ENCODE measurements at regions of chr20 and their contacts with region 1.

Region 1: GRCh38 chr20:32762149-32762753 is at the start of gene DNMT3B:
- DNase-seq: peak; percentile 94 to 99 (median 99)
- ATAC-seq: peak; percentile 78
- H3K4me3 ChIP-seq: peak within 1 kb of the TSS; percentile 90
- H3K27ac ChIP-seq: peak within 1 kb of the TSS; percentile 86
- H3K4me1 ChIP-seq: peaks cover 27 to 55% of the 10 kb centered on the region in 2 experiments; a peak in 4 of 5 replicates
- H3K27me3 ChIP-seq: no peaks in the 10 kb centered on the region
- CTCF ChIP-seq: peak in 2 of 3 experiments; percentile 47 to 67; a peak in 4 of 6 replicates
- EP300 ChIP-seq: peak; percentile 60; the same call in 1 of the 2 replicates
- POLR2A ChIP-seq: no peak; the same call in 1 of the 2 replicates
- RAD21 ChIP-seq: peak; percentile 47 to 70; a peak in 3 of 4 replicates
- polyA plus RNA-seq, gene DNMT3B: 9.3 to 11.5 TPM

Region 2: DNA sequence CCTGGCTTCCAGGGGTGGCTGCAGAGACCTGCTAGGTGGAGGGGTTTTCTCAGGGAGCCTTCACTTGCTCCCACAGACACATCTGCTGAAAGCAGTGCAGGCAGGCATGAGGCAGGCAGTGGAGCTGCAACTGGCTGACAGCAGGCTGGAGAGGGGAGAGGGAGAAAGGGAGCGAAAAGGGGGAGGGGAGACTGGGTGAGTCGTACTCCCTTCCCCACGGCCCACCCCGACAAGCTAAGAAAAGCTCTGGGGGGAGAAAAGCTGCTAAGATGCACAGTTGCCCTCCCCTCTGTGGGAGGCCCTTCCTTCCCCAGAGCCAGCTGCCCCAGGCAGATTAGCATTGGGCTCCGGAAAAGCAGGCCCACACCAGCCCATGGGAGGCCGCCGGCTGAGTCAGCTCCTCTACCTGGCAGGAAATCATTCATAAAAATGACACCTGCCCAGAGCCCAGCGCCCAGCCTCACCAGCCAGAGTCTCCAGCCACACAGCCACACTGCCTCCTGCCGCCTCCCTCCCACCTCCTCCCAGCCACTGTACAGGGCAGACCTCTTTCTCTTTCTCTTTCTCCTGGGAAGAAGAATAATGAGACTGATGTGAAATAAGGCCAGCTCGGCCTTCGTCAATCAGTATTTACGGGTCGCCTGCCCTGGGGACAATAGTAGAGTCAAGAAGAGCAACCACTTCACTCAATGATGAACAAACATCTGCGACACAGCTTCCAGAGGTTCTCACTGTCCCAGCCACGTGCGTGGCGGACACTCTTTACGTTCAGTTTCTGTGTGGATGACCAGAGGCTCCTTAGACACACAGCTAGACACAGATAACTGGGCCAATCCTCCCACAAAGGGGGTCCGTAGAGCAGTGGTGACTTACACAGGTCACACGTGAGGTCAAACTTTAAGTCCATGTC is 80.8 kb before region 1 on chr20:
- CTCF ChIA-PET with region 1: no interaction called
- POLR2A ChIA-PET with region 1: interaction called, 7 read pairs
- in situ Hi-C with region 1: loop called (anchors 5 kb)
- intact Hi-C with region 1: loop called (anchors 5 kb)
- DNase-seq: peak; percentile 84 to 97 (median 89)
- ATAC-seq: peak; percentile 91
- H3K4me3 ChIP-seq: no peak overlapping the region; the same call in 1 of the 2 replicates
- H3K27ac ChIP-seq: peak overlapping the region; percentile 93
- H3K4me1 ChIP-seq: peaks cover 56 to 57% of the 10 kb centered on the region in 2 experiments
- H3K27me3 ChIP-seq: no peaks in the 10 kb centered on the region
- CTCF ChIP-seq: peak in 1 of 3 experiments; percentile 16; a peak in 1 of 6 replicates
- EP300 ChIP-seq: peak; percentile 85; the same call in 1 of the 2 replicates
- POLR2A ChIP-seq: peak; percentile 70
- RAD21 ChIP-seq: peak in 1 of 2 experiments; percentile 28; a peak in 1 of 4 replicates

Region 3: DNA sequence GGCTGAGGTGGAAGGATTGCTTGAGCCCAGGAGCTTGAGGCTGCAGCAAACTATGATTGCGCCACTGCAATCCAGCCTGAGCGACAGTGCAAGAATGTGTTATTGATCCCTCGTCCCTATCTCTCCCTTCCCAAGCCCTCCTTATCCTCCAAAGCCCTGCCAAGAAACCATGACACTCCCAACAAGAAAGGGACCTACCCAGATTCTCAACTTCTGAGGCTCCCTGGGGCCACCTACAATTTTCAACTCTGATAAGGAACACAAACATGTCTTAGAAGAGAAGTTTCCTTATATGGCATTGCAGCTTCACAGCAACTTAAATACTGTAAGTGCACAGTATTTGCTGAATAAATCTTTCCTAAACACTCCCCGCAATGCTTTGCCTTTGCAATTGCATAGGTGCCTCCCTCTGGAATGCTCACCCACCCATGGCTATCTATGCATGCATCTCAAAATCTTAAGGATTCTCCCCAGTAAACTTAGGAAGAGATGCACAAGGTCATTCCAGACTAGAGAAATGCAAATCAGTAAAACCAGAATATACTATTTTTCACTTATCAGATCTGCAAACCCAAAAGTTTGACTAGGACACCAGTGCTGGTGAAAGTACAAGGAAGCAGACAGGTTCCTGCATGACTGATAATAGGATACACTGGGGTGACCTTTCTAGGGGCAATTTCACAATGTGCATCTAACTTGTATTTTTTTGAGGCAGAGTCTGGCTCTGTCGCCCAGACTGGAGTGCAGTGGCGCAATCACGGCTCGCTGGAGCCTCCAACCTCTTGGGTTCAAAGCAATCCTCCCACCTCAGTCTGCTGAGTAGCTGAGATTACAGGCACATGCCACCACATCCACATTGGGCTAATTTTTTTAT is 30.6 kb before region 1 on chr20:
- CTCF ChIA-PET with region 1: no interaction called
- POLR2A ChIA-PET with region 1: interaction called, 13 read pairs
- in situ Hi-C with region 1: no loop called
- intact Hi-C with region 1: no loop called
- DNase-seq: peak; percentile 44 to 68 (median 58)
- ATAC-seq: peak; percentile 69
- H3K4me3 ChIP-seq: no peak overlapping the region
- H3K27ac ChIP-seq: peak overlapping the region; percentile 59; the same call in 2 of the 3 replicates
- H3K4me1 ChIP-seq: peaks cover 19 to 21% of the 10 kb centered on the region in 2 experiments
- H3K27me3 ChIP-seq: no peaks in the 10 kb centered on the region
- CTCF ChIP-seq: no peak
- EP300 ChIP-seq: no peak; the same call in 1 of the 2 replicates
- POLR2A ChIP-seq: no peak
- RAD21 ChIP-seq: no peak

Region 4: DNA sequence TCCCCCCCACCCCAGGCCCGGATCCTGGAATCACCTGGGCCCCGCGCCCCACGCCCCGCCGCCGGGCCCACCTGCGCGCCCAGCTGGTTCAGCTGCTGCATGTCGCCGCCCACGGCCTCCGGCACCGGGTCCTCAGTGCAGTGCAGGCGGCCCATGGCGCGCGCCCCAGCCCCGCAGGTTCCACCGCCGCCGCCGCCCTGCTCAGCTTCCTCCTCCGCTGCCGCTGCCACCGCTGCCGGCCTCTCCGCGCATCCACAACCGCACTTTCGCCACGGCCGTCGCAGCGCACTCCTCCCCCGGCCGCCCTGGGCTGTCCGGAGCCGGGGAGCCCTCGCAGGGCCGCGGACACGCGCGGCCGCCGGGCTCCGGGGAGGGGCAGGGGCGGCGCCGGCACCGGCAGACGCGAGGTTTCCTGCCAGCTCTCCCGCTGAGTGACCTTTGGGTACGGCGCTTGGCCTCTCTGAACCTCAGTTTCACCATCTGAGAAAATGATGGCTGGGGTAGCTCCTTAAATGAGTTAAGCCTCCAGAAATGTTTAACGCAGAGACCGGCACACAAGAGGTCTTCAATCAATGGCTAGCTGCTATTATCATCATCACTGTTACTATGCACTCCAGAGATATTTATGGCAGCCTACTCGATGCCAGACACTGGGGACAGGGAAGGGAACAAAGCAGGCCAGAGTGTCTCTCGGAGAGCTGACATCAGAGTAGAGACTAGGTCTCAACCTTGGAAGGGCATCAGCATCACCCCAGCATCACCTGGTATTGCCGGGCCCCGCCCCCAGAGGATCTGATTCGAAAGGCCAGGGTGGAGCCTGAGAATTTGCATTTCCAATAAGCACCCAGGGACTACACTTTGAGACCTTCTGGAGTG is 18.8 kb before region 1 on chr20 and contains the start of gene COMMD7:
- CTCF ChIA-PET with region 1: no interaction called
- POLR2A ChIA-PET with region 1: interaction called, 30 read pairs
- in situ Hi-C with region 1: no loop called
- intact Hi-C with region 1: loop called (anchors 2 kb)
- DNase-seq: peak; percentile 42 to 75 (median 66)
- ATAC-seq: peak; percentile 80
- H3K4me3 ChIP-seq: peak within 1 kb of the TSS; percentile 64
- H3K27ac ChIP-seq: peak within 1 kb of the TSS; percentile 70
- H3K4me1 ChIP-seq: peaks cover 24 to 47% of the 10 kb centered on the region in 2 experiments; a peak in 4 of 5 replicates
- H3K27me3 ChIP-seq: no peaks in the 10 kb centered on the region
- CTCF ChIP-seq: no peak
- EP300 ChIP-seq: peak; percentile 77; the same call in 1 of the 2 replicates
- POLR2A ChIP-seq: no peak
- RAD21 ChIP-seq: peak; percentile 6 to 16; a peak in 1 of 4 replicates
- polyA plus RNA-seq, gene COMMD7: 11.9 to 17.0 TPM

Region 5: GRCh38 chr20:33401184-33401920 is 639.1 kb after region 1 on chr20 and contains the start of gene CDK5RAP1:
- CTCF ChIA-PET with region 1: no interaction called
- POLR2A ChIA-PET with region 1: no interaction called
- in situ Hi-C with region 1: no loop called
- intact Hi-C with region 1: no loop called
- DNase-seq: peak; percentile 84 to 96 (median 86)
- ATAC-seq: peak; percentile 95
- H3K4me3 ChIP-seq: peak within 1 kb of the TSS; percentile 88
- H3K27ac ChIP-seq: peak within 1 kb of the TSS; percentile 75
- H3K4me1 ChIP-seq: peaks cover 10 to 14% of the 10 kb centered on the region in 2 experiments
- H3K27me3 ChIP-seq: no peaks in the 10 kb centered on the region
- CTCF ChIP-seq: no peak
- EP300 ChIP-seq: peak; percentile 20; the same call in 1 of the 2 replicates
- POLR2A ChIP-seq: peak; percentile 90
- RAD21 ChIP-seq: peak in 1 of 2 experiments; percentile 4; a peak in 1 of 4 replicates
- polyA plus RNA-seq, gene CDK5RAP1: 116 to 127 TPM